Ascending aorta (tissue), 2 donors: ENCODE measurements at regions of chr20 and their contacts with region 1.

Region 1: DNA sequence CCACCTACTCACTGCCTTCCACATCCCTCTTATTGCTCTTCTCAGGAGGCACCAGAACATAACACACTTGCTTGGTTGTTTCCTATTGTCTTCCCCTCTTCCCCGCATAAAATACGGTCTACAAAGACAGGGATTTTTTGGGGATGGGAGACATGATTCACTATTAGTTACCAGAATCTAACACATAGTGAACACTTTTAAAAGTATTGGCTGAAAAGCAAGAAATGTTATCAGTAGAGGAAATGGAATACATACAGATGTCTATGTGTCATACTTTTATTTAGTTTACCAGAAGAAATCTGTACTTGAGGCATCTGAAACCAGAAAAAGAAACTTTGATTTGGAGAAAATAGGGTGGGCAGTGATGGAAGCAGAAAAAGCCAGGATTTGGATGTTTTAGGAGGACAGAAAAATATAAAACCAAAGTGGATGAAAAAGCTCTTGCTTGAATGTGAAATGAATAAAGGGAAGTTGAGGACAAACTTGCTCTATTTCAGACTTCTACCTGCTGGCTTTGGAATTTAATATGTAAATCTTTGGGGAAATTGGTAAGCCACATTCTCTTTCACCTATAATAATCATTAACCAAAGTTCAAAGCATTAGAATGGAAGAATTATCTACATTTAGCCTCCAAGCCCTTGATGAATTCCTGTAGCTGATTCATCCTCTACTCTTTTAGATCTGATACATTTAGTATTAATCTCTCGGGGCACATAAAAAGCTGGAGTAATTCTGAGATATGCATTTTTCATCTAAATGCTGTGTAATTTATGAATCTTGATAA is 82.6 kb downstream of the DOK5 start:
- DNase-seq: no peak
- H3K4me3 ChIP-seq: no peak overlapping the region
- H3K27ac ChIP-seq: peak overlapping the region in 1 of 2 donors; percentile 26
- H3K4me1 ChIP-seq: no peaks in the 10 kb centered on the region
- H3K27me3 ChIP-seq: no peaks in the 10 kb centered on the region
- CTCF ChIP-seq: no peak

Region 2: DNA sequence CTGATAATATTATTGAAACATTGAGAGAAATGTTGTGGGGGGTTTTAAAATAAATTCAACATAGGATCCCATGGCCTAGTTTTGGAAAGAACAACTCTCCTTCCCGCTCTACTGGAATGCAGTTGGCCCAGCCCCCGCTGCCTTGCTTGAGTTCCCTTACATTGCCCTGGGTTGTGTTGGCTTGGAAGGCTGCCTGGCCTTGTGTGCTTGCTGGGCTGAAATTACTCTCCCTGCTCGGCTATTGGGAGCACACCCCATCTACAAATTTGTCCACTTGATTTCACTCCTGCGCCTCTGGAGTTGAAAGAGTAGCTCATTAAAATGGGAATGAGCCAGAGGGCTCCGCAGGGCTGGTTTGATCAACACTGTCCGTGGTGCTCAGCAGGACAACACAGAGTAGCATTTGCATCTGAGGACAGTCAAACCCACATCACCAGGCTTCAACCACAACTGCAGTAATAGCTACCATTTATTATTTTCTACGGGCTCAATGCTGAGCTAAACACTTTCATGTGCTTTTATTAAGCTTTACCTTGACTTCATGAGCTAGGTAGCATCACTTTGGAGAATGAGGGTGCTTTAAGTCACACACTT is 47.4 kb before region 1 on chr20:
- intact Hi-C with region 1: no loop called
- DNase-seq: no peak
- H3K4me3 ChIP-seq: no peak overlapping the region
- H3K27ac ChIP-seq: no peak overlapping the region
- H3K4me1 ChIP-seq: no peaks in the 10 kb centered on the region
- H3K27me3 ChIP-seq: no peaks in the 10 kb centered on the region
- CTCF ChIP-seq: no peak

Region 3: GRCh38 chr20:54533081-54533480 is 24.9 kb before region 1 on chr20:
- intact Hi-C with region 1: no loop called
- DNase-seq: no peak
- H3K4me3 ChIP-seq: no peak overlapping the region
- H3K27ac ChIP-seq: no peak overlapping the region
- H3K4me1 ChIP-seq: no peaks in the 10 kb centered on the region
- H3K27me3 ChIP-seq: no peaks in the 10 kb centered on the region
- CTCF ChIP-seq: no peak

Region 4: GRCh38 chr20:54598352-54598751 is 40.4 kb after region 1 on chr20:
- intact Hi-C with region 1: loop called (anchors 5 kb)
- DNase-seq: no peak
- H3K4me3 ChIP-seq: no peak overlapping the region
- H3K27ac ChIP-seq: no peak overlapping the region
- H3K4me1 ChIP-seq: no peaks in the 10 kb centered on the region
- H3K27me3 ChIP-seq: no peaks in the 10 kb centered on the region
- CTCF ChIP-seq: no peak

Region 5: GRCh38 chr20:55069951-55070350 is 512.0 kb after region 1 on chr20:
- intact Hi-C with region 1: no loop called
- DNase-seq: no peak
- H3K4me3 ChIP-seq: no peak overlapping the region
- H3K27ac ChIP-seq: no peak overlapping the region
- H3K4me1 ChIP-seq: no peaks in the 10 kb centered on the region
- H3K27me3 ChIP-seq: no peaks in the 10 kb centered on the region
- CTCF ChIP-seq: no peak